Activated naive CD4-positive, alpha-beta T cell treated with anti-CD3 and anti-CD28 coated beads for 36 hours (primary cell): ENCODE measurements at regions of chr3 and their contacts with region 1.

Region 1: DNA sequence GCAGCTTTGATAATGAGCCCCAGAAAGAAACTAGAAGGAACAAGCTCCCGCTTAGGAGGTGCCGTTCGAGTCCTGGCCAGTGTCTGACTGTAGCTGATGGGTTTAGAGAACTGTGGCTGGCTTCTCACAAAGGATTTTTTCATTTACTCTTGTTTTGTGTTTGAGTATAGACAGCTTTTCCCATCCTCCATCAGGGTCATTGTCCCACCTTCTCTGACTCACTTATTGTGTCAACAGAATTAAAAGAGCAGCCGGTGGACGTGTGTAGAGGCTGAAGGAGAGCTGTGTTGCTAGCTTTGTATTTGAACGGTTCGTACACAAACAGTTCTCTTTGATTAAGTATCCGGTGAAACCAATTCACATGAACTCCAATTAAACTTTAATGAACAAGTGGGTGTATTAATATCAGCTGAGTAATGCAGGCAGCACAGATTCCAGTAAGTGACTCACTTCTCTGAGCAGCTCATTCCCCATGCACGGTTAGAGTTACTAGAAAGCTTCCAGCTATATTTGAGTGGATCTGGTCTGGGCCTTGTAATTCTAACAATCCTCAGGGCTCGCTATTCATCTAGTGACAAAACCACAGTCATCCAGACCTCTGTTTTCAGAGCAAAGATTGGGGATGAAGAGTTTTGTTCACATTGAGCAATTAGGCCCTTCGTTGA is 141.0 kb downstream of the LPP start:
- DNase-seq: peak; percentile 49
- H3K4me3 Mint-ChIP-seq: no peak overlapping the region
- H3K27ac Mint-ChIP-seq: peak overlapping the region; percentile 69
- H3K4me1 Mint-ChIP-seq: peaks cover 85% of the 10 kb centered on the region
- H3K27me3 Mint-ChIP-seq: no peaks in the 10 kb centered on the region

Region 2: GRCh38 chr3:188253800-188254452 is 41.0 kb before region 1 on chr3:
- CTCF ChIA-PET with region 1: interaction called, 3 read pairs
- intact Hi-C with region 1: loop called (anchors 1 kb)
- DNase-seq: peak; percentile 54
- H3K4me3 Mint-ChIP-seq: no peak overlapping the region
- H3K27ac Mint-ChIP-seq: peak overlapping the region; percentile 76
- H3K4me1 Mint-ChIP-seq: peaks cover 44% of the 10 kb centered on the region
- H3K27me3 Mint-ChIP-seq: no peaks in the 10 kb centered on the region

Region 3: GRCh38 chr3:188309437-188310269 is 14.7 kb after region 1 on chr3:
- CTCF ChIA-PET with region 1: interaction called, 4 read pairs
- intact Hi-C with region 1: loop called (anchors 1 kb)
- DNase-seq: no peak
- H3K4me3 Mint-ChIP-seq: no peak overlapping the region
- H3K27ac Mint-ChIP-seq: peak overlapping the region; percentile 22
- H3K4me1 Mint-ChIP-seq: peaks cover 25% of the 10 kb centered on the region
- H3K27me3 Mint-ChIP-seq: no peaks in the 10 kb centered on the region

Region 4: DNA sequence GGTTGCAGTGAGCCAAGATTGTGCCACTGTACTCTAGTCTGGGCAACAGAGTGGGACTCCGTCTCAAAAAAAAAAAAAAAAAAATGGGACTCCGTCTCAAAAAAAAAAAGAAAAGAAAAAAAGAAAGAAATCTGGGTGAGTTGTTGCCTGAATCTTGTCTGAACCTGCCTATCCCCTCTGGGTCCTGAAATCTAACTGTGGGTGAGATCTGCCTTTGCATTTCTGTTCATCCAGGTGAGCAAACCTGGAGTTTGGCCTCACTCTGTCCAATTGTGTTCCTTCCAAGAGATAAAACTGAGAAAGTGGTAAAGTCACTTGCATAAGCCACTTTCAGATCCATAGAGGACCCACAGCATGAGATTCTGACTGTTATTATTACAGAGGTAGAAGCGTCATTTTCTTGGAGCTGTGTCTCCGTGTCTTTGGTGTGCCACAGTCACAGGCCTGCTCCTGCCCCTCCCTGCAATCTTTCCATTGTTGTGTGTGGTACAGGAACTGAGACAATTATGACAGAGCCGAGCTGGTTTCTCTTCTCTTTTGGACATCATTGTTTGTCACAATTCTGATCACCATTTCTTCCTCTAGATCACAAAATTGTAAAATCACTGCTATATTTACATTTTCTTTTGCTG is 94.9 kb after region 1 on chr3:
- CTCF ChIA-PET with region 1: no interaction called
- intact Hi-C with region 1: loop called (anchors 1 kb)
- DNase-seq: peak; percentile 85
- H3K4me3 Mint-ChIP-seq: no peak overlapping the region
- H3K27ac Mint-ChIP-seq: peak overlapping the region; percentile 67
- H3K4me1 Mint-ChIP-seq: peaks cover 39% of the 10 kb centered on the region
- H3K27me3 Mint-ChIP-seq: no peaks in the 10 kb centered on the region

Region 5: DNA sequence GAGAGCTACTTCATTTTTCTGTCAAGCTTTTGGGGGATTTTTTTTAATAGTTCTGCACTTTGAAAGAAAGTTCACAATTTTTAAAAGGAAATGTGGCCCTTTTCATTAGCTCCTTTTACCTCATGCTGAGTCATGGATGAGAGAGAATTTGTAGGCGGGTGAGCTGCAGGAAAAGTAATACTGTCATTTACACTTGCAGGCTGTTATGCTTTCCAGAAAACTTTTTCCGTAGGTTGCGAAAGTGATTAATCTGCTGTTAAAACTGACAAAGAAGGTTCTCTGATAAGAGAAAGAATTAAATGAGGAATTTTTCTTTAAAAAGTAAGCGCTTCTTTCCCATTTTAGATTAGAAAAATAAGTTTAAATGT is 289.2 kb after region 1 on chr3:
- CTCF ChIA-PET with region 1: no interaction called
- intact Hi-C with region 1: loop called (anchors 5 kb)
- DNase-seq: peak; percentile 61
- H3K4me3 Mint-ChIP-seq: no peak overlapping the region
- H3K27ac Mint-ChIP-seq: no peak overlapping the region
- H3K4me1 Mint-ChIP-seq: peaks cover 15% of the 10 kb centered on the region
- H3K27me3 Mint-ChIP-seq: no peaks in the 10 kb centered on the region

Region 6: GRCh38 chr3:188683032-188683521 is 388.1 kb after region 1 on chr3:
- CTCF ChIA-PET with region 1: no interaction called
- intact Hi-C with region 1: loop called (anchors 5 kb)
- DNase-seq: peak; percentile 51
- H3K4me3 Mint-ChIP-seq: no peak overlapping the region
- H3K27ac Mint-ChIP-seq: peak overlapping the region; percentile 37
- H3K4me1 Mint-ChIP-seq: peaks cover 32% of the 10 kb centered on the region
- H3K27me3 Mint-ChIP-seq: no peaks in the 10 kb centered on the region